ENCODE measurements at regions of chr21 and their contacts with region 1.

Region 1: GRCh38 chr21:45439161-45439872 is 34.4 kb downstream of the COL18A1 start:
- DNase-seq: peak; percentile 97

Region 2: GRCh38 chr21:45152265-45152746 is 287.0 kb before region 1 on chr21:
- intact Hi-C with region 1: loop called (anchors 10 kb)
- DNase-seq: peak; percentile 86

Region 3: DNA sequence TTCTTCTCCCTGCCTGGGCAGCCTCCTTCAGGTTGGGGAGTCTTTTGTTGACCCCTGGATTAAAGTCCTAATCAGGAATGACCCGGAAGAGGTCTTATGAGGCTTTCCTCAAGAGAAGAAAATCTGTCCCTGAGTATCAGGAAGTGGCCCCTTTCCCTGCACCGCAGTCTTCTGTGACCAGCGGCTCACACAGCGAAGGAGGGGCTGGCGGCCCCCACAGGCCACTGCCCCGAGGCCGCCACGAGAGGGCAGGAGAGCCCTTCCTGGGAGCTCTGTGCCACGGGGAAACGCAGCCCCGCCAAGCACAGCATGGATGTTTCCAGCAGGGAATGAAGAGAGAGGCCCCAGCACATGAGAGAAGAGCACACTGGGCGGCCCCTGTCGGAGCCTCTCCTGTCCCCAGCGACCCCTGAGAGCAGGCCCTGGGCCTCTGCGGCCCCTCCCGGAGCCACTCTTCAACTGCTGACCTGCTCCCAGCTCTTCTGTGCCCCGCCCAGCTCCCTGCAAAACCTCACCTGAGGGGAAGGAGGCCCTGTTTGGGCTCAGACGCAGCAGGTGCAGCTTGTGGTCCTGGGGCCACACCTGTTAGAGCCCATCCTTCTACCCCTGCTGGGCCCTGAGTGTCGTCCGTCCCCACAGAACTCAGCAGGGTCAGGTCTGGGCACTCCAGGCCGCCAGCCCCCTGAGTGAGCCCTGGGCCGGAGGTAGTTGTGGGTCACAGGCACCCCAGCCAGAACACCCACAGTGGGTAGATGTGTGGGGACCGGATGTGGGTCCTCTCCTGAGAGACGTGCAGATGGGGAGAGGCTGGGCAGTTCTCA is 146.7 kb before region 1 on chr21:
- intact Hi-C with region 1: loop called (anchors 1 to 2 kb)
- DNase-seq: peak; percentile 96

Region 4: GRCh38 chr21:45378258-45378966 is 60.9 kb before region 1 on chr21:
- intact Hi-C with region 1: loop called in 1 of 2 experiments (anchors 10 kb)
- DNase-seq: peak; percentile 32

Measured in posterior vena cava (tissue), 2 donors.